MCF 10A (cell line): ENCODE measurements at regions of chr17 and their contacts with region 1.

Region 1: DNA sequence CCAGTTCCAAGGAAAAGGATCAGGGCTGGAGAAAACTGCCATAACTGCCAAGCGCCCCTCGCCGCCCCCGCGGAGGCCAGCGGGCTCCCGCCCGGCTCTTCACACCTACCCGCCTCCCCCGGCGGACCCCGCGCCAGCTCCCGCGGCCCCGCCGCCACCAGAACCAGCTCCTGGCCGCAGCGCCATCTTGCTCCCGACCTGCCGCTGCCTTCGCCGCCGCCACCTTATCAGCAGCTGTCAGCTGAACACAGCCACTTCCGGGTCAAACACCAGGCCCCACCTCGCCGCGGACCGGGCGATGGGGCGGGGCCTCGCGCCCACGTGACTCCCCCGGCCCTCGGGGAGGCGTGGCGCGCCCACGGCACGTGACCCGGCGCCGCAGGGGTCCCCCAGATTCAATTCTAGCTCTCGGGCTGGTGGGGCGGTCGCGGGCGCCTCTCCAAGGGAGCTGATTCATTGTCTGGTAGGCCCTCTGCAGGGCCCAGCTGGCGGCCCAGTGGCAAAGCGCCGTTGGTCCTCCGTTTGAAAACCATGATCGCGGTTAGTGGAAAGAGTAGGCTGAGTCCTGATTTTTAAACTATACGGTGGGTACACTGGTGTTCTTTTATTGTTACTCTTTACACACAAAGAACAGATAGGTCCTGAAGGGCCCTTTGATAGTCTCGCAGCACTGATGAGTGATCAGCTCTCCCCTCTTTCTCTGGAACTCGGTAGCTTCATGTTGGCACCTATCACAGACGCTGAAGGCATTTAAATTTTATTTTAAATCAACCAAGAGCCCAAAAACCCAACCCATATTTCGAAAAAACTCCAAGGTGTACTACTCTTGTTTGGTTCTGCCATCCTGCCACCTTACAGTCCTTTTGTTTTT is at the start of gene SYNRG:
- DNase-seq: peak; percentile 95
- H3K4me3 Mint-ChIP-seq: peak within 1 kb of the TSS; percentile 87
- H3K27ac Mint-ChIP-seq: peak within 1 kb of the TSS; percentile 89
- H3K4me1 Mint-ChIP-seq: peaks cover 9% of the 10 kb centered on the region
- H3K27me3 Mint-ChIP-seq: no peaks in the 10 kb centered on the region
- CTCF ChIP-seq: no peak
- total RNA-seq, gene SYNRG: 18.0 and 26.8 TPM in 2 replicates

Region 2: GRCh38 chr17:37592291-37592690 is 17.1 kb before region 1 on chr17:
- CTCF ChIA-PET with region 1: interaction called, 4 read pairs
- POLR2A ChIA-PET with region 1: interaction called, 49 read pairs
- intact Hi-C with region 1: no loop called
- DNase-seq: no peak
- H3K4me3 Mint-ChIP-seq: no peak overlapping the region
- H3K27ac Mint-ChIP-seq: no peak overlapping the region
- H3K4me1 Mint-ChIP-seq: peaks cover 14% of the 10 kb centered on the region
- H3K27me3 Mint-ChIP-seq: no peaks in the 10 kb centered on the region
- CTCF ChIP-seq: no peak

Region 3: DNA sequence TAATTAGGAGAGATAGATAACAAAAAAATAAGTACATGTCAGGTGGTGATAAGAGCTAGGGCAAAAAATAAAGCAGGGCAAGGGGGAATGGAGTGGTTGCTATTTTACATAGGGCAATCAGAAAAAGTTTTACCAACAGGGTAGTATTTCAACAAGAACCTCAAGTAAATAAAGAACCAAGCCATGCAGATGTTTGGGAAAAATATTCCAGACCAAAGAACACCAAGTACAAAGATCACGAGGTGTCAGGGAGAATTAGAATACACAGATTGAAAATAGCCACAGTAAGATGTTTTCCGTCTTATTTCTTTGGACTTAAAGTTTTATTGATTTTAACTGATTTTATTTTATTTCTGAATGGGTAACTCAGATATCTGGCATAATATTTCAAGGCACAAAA is 11.3 kb before region 1 on chr17:
- CTCF ChIA-PET with region 1: interaction called, 3 read pairs
- POLR2A ChIA-PET with region 1: interaction called, 33 read pairs
- intact Hi-C with region 1: no loop called
- DNase-seq: no peak
- H3K4me3 Mint-ChIP-seq: no peak overlapping the region
- H3K27ac Mint-ChIP-seq: no peak overlapping the region
- H3K4me1 Mint-ChIP-seq: no peaks in the 10 kb centered on the region
- H3K27me3 Mint-ChIP-seq: no peaks in the 10 kb centered on the region
- CTCF ChIP-seq: no peak

Region 4: GRCh38 chr17:37643118-37643766 is 33.8 kb after region 1 on chr17 and contains the start of gene DDX52:
- CTCF ChIA-PET with region 1: interaction called, 4 read pairs
- POLR2A ChIA-PET with region 1: interaction called, 17 read pairs
- intact Hi-C with region 1: no loop called
- DNase-seq: peak; percentile 94
- H3K4me3 Mint-ChIP-seq: peak within 1 kb of the TSS; percentile 94
- H3K27ac Mint-ChIP-seq: peak within 1 kb of the TSS; percentile 95
- H3K4me1 Mint-ChIP-seq: peaks cover 32% of the 10 kb centered on the region
- H3K27me3 Mint-ChIP-seq: peaks cover 16% of the 10 kb centered on the region
- CTCF ChIP-seq: no peak
- total RNA-seq, gene DDX52: 37.8 and 42.5 TPM in 2 replicates